Heart left ventricle (tissue), 16 donors: ENCODE measurements at regions of chr6 and their contacts with region 1.

Region 1: DNA sequence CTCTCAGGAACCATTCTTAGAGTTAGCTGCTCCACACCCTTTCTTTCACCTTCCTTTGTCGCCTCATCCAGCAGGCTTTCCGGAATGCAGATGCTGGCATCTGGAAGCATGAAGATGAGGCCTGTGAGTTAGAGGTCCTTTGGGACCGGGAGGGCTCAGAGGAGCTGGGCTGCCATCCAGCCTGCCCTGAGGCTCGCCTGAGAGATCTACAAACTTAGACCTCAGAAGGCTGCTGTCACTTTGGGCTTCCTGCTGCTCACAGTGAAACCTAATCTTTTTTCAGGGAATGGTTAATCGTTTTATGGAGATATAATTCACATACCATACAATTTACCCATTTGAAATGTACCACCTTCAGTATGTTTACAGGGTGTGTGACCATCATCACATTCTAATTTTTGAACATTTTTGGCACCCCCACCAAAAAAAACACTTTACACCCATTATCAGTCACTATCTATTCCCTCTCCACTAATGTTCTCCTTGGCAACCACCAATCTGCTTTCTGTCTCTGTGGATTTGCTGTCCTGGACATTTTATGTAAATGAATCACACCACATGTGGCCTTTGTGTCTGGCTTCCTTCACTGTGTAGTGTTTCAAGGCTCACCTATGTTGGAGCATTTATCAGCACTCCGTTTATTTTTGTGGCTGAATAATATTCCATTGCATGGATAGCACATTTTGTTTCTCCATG is 20.0 kb upstream of the MPC1 start:
- DNase-seq: no peak
- ATAC-seq: no peak
- H3K4me3 ChIP-seq: no peak overlapping the region
- H3K27ac ChIP-seq: no peak overlapping the region
- H3K4me1 ChIP-seq: no peaks in the 10 kb centered on the region
- H3K27me3 ChIP-seq: peaks cover 0 to 6% (median 0%) of the 10 kb centered on the region in 9 donors
- CTCF ChIP-seq: no peak
- POLR2A ChIP-seq: no peak

Region 2: GRCh38 chr6:165884813-165885765 is 517.6 kb before region 1 on chr6:
- intact Hi-C with region 1: loop called in 1 of 10 experiments (anchors 5 kb)
- DNase-seq: peak; percentile 74 to 86 (median 77)
- ATAC-seq: peak; percentile 74 to 96 (median 89)
- H3K4me3 ChIP-seq: no peak overlapping the region
- H3K27ac ChIP-seq: no peak overlapping the region
- H3K4me1 ChIP-seq: no peaks in the 10 kb centered on the region
- H3K27me3 ChIP-seq: peaks cover 0 to 2% (median 0%) of the 10 kb centered on the region in 9 donors
- CTCF ChIP-seq: peak; percentile 73 to 95 (median 88)
- POLR2A ChIP-seq: no peak

Region 3: DNA sequence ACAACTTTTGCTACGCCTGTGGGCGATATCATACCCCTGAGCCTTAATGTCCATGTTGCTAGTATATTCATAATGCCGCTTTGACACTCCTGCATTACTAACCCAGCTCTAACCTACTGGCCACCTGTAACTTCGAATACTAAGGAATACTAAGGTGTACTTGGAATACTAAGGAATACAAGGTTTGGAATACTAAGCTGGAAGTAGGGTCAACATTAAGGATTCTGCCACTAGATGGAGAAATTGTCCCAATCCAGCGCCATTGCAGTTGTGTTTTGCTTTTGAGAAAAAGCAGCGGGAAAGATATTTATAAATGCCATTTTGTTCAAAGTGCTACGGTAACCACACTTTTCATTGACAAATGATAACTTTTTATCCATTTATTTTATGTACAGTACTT is 245.8 kb before region 1 on chr6:
- intact Hi-C with region 1: loop called in 6 of 10 experiments (anchors 5 to 10 kb)
- DNase-seq: no peak
- ATAC-seq: no peak
- H3K4me3 ChIP-seq: no peak overlapping the region
- H3K27ac ChIP-seq: no peak overlapping the region
- H3K4me1 ChIP-seq: no peaks in the 10 kb centered on the region
- H3K27me3 ChIP-seq: peaks cover 0 to 45% (median 0%) of the 10 kb centered on the region in 9 donors
- CTCF ChIP-seq: peak in 8 of 12 donors; percentile 13 to 52 (median 40)
- POLR2A ChIP-seq: no peak

Region 4: DNA sequence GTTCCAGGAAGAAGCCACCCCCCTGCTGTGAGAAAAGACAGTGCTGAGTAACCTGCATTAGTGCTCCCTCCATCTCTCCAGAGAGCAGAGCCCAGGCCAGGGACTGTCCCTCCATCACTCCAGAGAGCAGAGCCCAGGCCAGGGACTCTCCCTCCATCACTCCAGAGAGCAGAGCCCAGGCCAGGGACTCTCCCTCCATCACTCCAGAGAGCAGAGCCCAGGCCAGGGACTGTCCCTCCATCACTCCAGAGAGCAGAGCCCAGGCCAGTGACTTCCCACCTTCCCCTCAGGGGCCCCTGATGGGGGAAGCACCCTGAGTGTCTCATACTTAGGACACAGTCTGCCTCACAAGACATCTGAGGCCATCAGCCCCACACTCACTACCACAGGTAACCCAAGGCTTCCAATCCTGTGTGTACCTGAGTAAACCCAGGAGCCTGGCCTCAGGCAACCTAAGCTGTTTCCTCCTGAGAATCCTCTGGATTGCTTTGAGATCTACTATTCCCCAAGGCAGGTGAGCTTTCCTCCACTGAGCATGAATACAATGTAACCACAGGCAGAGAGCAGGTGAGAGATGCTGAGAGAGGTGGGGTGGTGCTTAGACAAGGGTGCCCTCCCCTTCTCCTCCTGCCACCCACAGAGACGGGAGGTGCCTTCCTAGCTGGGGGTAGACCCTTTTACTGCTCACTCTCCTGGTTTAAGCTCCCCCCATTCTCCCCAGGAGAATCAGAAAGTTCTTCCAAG is 240.0 kb before region 1 on chr6:
- intact Hi-C with region 1: loop called in 6 of 10 experiments (anchors 5 to 10 kb)
- DNase-seq: no peak
- ATAC-seq: no peak
- H3K4me3 ChIP-seq: no peak overlapping the region
- H3K27ac ChIP-seq: no peak overlapping the region
- H3K4me1 ChIP-seq: peaks cover 4 to 17% (median 8%) of the 10 kb centered on the region in 12 donors
- H3K27me3 ChIP-seq: peaks cover 17 to 81% (median 46%) of the 10 kb centered on the region in 9 donors
- CTCF ChIP-seq: no peak
- POLR2A ChIP-seq: no peak

Region 5: GRCh38 chr6:166275714-166276166 is 127.0 kb before region 1 on chr6:
- intact Hi-C with region 1: loop called (anchors 1 to 2 kb)
- DNase-seq: peak; percentile 51 to 89 (median 65)
- ATAC-seq: peak in 3 of 4 donors; percentile 76 to 85 (median 84)
- H3K4me3 ChIP-seq: no peak overlapping the region
- H3K27ac ChIP-seq: no peak overlapping the region
- H3K4me1 ChIP-seq: peaks cover 0 to 6% (median 0%) of the 10 kb centered on the region in 12 donors
- H3K27me3 ChIP-seq: peaks cover 0 to 14% (median 4%) of the 10 kb centered on the region in 9 donors
- CTCF ChIP-seq: peak; percentile 95 to 100 (median 99)
- POLR2A ChIP-seq: no peak

Region 6: DNA sequence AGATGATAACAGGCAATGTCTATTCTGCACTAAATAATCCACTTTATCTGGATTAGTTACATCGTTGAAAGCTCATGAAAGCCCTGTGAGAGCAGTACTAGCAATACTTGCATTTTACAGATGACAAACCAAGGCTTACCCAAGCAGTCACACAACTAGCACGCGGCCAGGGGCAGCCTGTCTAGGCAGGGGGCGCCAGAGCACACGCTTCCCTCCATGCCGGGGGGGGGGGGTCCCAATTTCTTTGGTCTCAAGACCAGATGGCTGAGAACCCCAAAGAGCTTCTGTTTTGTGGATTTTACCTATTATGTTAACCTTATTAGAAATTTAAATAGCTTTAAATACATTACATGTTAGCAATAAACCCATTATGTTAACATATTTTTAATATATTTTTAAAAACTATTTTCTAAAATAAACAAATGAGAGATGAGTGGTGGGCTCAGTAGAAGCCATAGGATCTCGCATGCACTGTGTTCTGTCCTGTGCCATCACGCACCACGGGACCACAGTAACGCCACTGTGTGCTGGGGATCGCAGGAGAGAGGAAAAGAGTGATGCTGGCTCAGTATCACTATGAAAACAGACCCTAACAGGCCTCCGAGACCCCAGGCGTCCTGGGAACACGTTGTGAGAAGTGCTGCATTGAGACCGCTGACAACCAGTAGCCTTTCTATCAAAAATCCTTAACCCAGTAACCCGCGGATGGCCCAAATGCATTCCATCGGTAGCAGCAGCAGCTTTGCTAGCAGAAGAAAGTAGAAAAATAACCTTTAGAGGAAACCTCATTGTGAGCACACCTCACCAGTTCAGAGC is 89.3 kb before region 1 on chr6:
- intact Hi-C with region 1: loop called in 9 of 10 experiments (anchors 1 to 5 kb)
- DNase-seq: no peak
- ATAC-seq: peak in 3 of 4 donors; percentile 59 to 94 (median 86)
- H3K4me3 ChIP-seq: no peak overlapping the region
- H3K27ac ChIP-seq: no peak overlapping the region
- H3K4me1 ChIP-seq: peaks cover 0 to 3% (median under 1%) of the 10 kb centered on the region in 12 donors
- H3K27me3 ChIP-seq: peaks cover 0 to 17% (median 9%) of the 10 kb centered on the region in 9 donors
- CTCF ChIP-seq: peak; percentile 50 to 85 (median 68)
- POLR2A ChIP-seq: no peak